Endothelial cell of umbilical vein (primary cell): ENCODE measurements at regions of chr1 and their contacts with region 1.

Region 1: GRCh38 chr1:85240174-85240601 is 19.3 kb downstream of the C1orf52 start:
- DNase-seq: no peak
- H3K4me3 ChIP-seq: no peak overlapping the region
- H3K27ac ChIP-seq: no peak overlapping the region
- H3K4me1 ChIP-seq: peaks cover 11% of the 10 kb centered on the region
- H3K27me3 ChIP-seq: peaks cover 4 to 7% of the 10 kb centered on the region in 2 experiments
- CTCF ChIP-seq: peak in 1 of 2 donors; percentile 5
- POLR2A ChIP-seq: no peak

Region 2: DNA sequence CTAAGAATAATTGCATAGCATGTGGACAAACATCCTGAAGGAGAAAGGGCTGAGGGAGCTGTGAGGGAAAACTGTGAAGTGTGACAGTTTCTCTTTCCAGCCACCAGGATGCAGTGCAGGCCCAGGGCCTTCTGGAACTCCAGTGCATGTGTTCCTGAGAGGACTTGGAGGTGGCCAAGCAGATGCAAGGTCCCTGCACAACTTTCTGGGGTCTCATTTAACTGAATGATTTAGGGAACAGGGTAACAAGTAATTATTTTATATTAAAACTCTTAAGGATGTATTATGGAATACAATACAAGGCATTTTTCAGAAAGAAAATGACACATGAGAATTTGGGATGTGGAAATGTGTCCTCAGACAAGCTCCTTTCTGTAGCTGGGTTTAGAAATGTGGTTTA is 130.7 kb before region 1 on chr1:
- CTCF ChIA-PET with region 1: interaction called, 26 read pairs
- POLR2A ChIA-PET with region 1: no interaction called
- dilution Hi-C with region 1: no loop called
- intact Hi-C with region 1: no loop called
- DNase-seq: peak; percentile 71
- H3K4me3 ChIP-seq: no peak overlapping the region
- H3K27ac ChIP-seq: no peak overlapping the region
- H3K4me1 ChIP-seq: no peaks in the 10 kb centered on the region
- H3K27me3 ChIP-seq: peaks cover 8 to 23% of the 10 kb centered on the region in 2 experiments
- CTCF ChIP-seq: peak; percentile 65 to 80
- POLR2A ChIP-seq: no peak

Region 3: GRCh38 chr1:85200870-85201339 is 39.3 kb before region 1 on chr1 and contains the start of gene SYDE2:
- CTCF ChIA-PET with region 1: interaction called, 4 read pairs
- POLR2A ChIA-PET with region 1: no interaction called
- dilution Hi-C with region 1: no loop called
- intact Hi-C with region 1: loop called (anchors 5 kb)
- DNase-seq: peak; percentile 72
- H3K4me3 ChIP-seq: peak within 1 kb of the TSS; percentile 11 to 66 (median 64)
- H3K27ac ChIP-seq: peak within 1 kb of the TSS; percentile 69
- H3K4me1 ChIP-seq: peaks cover 16% of the 10 kb centered on the region
- H3K27me3 ChIP-seq: peaks cover 0 to 2% of the 10 kb centered on the region in 2 experiments
- CTCF ChIP-seq: no peak
- POLR2A ChIP-seq: peak; percentile 69
- total RNA-seq, gene SYDE2: 2.9 and 3.1 TPM in 2 replicates